PC-9 (cell line): ENCODE measurements at regions of chr10 and their contacts with region 1.

Region 1: DNA sequence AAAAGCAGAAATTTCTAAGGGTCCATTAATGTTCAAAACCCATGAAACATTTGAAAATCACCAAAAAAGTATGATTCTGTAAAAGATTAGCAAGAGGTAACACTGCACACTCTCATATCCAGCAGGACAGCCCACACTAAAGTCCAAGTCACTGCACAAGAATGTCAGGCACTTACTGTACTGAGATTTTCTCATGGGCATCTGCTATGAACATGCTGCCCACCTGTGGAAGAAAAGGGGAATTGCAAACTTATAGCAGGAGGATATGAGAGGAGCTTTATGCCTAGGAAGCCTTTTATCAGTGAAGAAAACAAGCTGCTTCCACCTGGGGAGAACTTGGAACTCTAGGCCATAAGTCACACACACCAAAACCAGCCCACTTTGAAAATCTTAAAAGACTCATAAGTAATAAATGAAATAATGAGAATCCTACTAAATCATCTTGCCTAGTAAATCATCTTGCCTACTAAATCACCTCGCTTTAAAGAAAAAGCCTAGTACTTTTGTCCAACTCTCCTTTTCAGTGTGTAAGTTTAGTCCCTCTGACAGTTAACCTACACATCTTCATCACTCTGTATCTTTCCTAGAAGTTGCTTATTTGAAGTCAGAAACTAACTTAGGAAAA is 46.1 kb downstream of the ARMH3 start:
- DNase-seq: peak; percentile 40 to 76
- H3K4me3 ChIP-seq: no peak overlapping the region
- H3K27ac ChIP-seq: no peak overlapping the region
- H3K4me1 ChIP-seq: peaks cover 4% of the 10 kb centered on the region; the same call in 1 of the 2 replicates
- H3K27me3 ChIP-seq: no peaks in the 10 kb centered on the region
- CTCF ChIP-seq: peak; percentile 83

Region 2: GRCh38 chr10:101857802-101858476 is 152.0 kb before region 1 on chr10:
- CTCF ChIA-PET with region 1: no interaction called
- POLR2A ChIA-PET with region 1: interaction called, 29 read pairs
- intact Hi-C with region 1: no loop called
- DNase-seq: no peak
- H3K4me3 ChIP-seq: no peak overlapping the region
- H3K27ac ChIP-seq: no peak overlapping the region
- H3K4me1 ChIP-seq: no peaks in the 10 kb centered on the region
- H3K27me3 ChIP-seq: no peaks in the 10 kb centered on the region
- CTCF ChIP-seq: no peak

Region 3: GRCh38 chr10:101889256-101890210 is 120.4 kb before region 1 on chr10:
- CTCF ChIA-PET with region 1: interaction called, 6 read pairs
- POLR2A ChIA-PET with region 1: no interaction called
- intact Hi-C with region 1: loop called (anchors 1 kb)
- DNase-seq: peak; percentile 43 to 48
- H3K4me3 ChIP-seq: no peak overlapping the region
- H3K27ac ChIP-seq: no peak overlapping the region
- H3K4me1 ChIP-seq: no peaks in the 10 kb centered on the region
- H3K27me3 ChIP-seq: no peaks in the 10 kb centered on the region
- CTCF ChIP-seq: peak; percentile 84